Heart left ventricle (tissue), 16 donors: ENCODE measurements at regions of chr9 and their contacts with region 1.

Region 1: GRCh38 chr9:107172160-107172978 is 110.7 kb upstream of the RAD23B start:
- DNase-seq: peak; percentile 66 to 77 (median 74)
- ATAC-seq: peak in 3 of 4 donors; percentile 59 to 70 (median 60)
- H3K4me3 ChIP-seq: no peak overlapping the region
- H3K27ac ChIP-seq: peak overlapping the region in 1 of 12 donors; percentile 13
- H3K4me1 ChIP-seq: peaks cover 0 to 30% (median 19%) of the 10 kb centered on the region in 12 donors
- H3K27me3 ChIP-seq: no peaks in the 10 kb centered on the region
- CTCF ChIP-seq: peak; percentile 81 to 94 (median 90)
- POLR2A ChIP-seq: no peak

Region 2: DNA sequence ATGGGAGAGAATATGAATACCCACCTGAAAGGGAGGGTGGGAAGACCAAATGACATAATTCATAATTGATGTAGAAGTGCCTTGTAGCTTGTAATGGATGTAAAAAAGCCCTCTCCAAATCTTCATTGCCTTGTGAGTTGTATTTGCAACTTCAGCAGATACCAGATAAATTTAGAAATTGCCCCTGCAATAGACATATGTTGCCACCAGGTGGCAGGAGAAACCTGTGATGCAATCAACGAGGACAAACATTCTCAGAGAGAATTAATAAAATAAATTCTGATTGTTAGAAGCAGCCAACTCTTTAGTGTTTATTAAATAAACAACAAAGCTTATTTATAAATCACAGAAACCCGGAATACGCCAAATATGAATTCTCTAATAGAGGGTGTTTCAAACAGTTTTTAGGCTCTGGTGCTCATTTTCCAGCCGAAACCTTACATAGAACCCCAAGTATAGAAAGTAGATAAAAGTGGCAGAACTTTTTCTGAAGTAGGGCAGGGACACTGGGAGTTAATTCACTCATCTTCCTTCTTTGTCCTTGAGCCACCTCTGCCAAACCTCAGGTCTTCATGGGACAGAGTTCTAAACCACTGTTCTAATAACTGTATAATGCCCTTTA is 1330.2 kb before region 1 on chr9:
- intact Hi-C with region 1: loop called in 5 of 10 experiments (anchors 1 to 10 kb)
- DNase-seq: no peak
- ATAC-seq: no peak
- H3K4me3 ChIP-seq: no peak overlapping the region
- H3K27ac ChIP-seq: no peak overlapping the region
- H3K4me1 ChIP-seq: no peaks in the 10 kb centered on the region
- H3K27me3 ChIP-seq: no peaks in the 10 kb centered on the region
- CTCF ChIP-seq: peak; percentile 47 to 82 (median 61)
- POLR2A ChIP-seq: no peak

Region 3: GRCh38 chr9:105901514-105902109 is 1270.8 kb before region 1 on chr9:
- intact Hi-C with region 1: loop called in 6 of 10 experiments (anchors 2 to 5 kb)
- DNase-seq: peak in 3 of 5 donors; percentile 27 to 52 (median 46)
- ATAC-seq: peak; percentile 73 to 96 (median 94)
- H3K4me3 ChIP-seq: no peak overlapping the region
- H3K27ac ChIP-seq: no peak overlapping the region
- H3K4me1 ChIP-seq: peaks cover 0 to 3% (median 0%) of the 10 kb centered on the region in 12 donors
- H3K27me3 ChIP-seq: no peaks in the 10 kb centered on the region
- CTCF ChIP-seq: peak; percentile 51 to 77 (median 72)
- POLR2A ChIP-seq: no peak

Region 4: DNA sequence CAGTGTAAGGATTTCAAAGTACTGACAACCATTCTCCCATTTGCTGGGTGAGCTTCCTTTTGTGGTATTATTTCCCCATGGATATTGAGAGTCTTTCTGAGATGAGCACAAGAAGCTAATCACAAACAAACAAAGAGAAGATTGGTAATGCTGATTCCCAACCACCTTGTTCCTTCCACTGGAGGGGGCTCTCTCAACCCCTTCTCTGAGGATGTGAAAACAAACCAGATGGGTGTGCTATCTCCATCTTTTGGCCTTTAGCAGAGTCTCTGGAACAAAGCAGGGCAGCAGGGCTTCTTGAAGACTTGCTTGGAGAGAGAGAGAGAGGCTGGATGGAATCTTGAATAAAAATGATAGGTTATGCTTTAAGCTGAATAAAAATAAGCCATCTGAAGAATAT is 886.1 kb before region 1 on chr9:
- intact Hi-C with region 1: loop called in 1 of 10 experiments (anchors 10 kb)
- DNase-seq: no peak
- ATAC-seq: no peak
- H3K4me3 ChIP-seq: no peak overlapping the region
- H3K27ac ChIP-seq: no peak overlapping the region
- H3K4me1 ChIP-seq: peaks cover 0 to 12% (median 0%) of the 10 kb centered on the region in 12 donors
- H3K27me3 ChIP-seq: no peaks in the 10 kb centered on the region
- CTCF ChIP-seq: peak in 4 of 12 donors; percentile 19 to 41 (median 34)
- POLR2A ChIP-seq: no peak

Region 5: DNA sequence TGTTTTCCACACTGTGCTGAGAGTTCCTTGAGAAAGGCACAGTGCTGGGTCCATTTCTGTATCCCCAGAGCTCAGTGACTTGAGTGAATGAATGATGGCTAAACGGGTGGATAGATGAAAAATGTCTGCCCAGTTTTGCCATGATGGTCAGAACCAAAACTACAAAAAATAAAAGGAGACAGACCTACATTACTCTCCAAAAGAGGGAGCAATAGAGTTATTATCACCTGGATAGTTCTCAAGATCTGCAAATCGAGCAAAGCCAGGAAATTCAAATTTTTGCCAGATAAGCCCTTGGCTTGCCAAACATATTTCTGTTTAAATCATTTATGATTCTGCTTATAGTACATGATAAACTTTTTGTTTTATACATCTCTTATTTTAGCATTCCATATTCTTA is 523.6 kb before region 1 on chr9:
- intact Hi-C with region 1: loop called in 3 of 10 experiments (anchors 5 to 10 kb)
- DNase-seq: no peak
- ATAC-seq: no peak
- H3K4me3 ChIP-seq: no peak overlapping the region
- H3K27ac ChIP-seq: no peak overlapping the region
- H3K4me1 ChIP-seq: no peaks in the 10 kb centered on the region
- H3K27me3 ChIP-seq: no peaks in the 10 kb centered on the region
- CTCF ChIP-seq: peak in 8 of 12 donors; percentile 6 to 50 (median 34)
- POLR2A ChIP-seq: no peak

Region 6: GRCh38 chr9:107251756-107252322 is 79.5 kb after region 1 on chr9:
- intact Hi-C with region 1: loop called in 1 of 10 experiments (anchors 2 kb)
- DNase-seq: peak in 4 of 5 donors; percentile 40 to 69 (median 60)
- ATAC-seq: peak; percentile 95 to 99 (median 98)
- H3K4me3 ChIP-seq: no peak overlapping the region
- H3K27ac ChIP-seq: peak overlapping the region in 9 of 12 donors; percentile 10 to 70 (median 52)
- H3K4me1 ChIP-seq: peaks cover 0 to 26% (median 8%) of the 10 kb centered on the region in 12 donors
- H3K27me3 ChIP-seq: no peaks in the 10 kb centered on the region
- CTCF ChIP-seq: no peak
- POLR2A ChIP-seq: no peak

Region 7: DNA sequence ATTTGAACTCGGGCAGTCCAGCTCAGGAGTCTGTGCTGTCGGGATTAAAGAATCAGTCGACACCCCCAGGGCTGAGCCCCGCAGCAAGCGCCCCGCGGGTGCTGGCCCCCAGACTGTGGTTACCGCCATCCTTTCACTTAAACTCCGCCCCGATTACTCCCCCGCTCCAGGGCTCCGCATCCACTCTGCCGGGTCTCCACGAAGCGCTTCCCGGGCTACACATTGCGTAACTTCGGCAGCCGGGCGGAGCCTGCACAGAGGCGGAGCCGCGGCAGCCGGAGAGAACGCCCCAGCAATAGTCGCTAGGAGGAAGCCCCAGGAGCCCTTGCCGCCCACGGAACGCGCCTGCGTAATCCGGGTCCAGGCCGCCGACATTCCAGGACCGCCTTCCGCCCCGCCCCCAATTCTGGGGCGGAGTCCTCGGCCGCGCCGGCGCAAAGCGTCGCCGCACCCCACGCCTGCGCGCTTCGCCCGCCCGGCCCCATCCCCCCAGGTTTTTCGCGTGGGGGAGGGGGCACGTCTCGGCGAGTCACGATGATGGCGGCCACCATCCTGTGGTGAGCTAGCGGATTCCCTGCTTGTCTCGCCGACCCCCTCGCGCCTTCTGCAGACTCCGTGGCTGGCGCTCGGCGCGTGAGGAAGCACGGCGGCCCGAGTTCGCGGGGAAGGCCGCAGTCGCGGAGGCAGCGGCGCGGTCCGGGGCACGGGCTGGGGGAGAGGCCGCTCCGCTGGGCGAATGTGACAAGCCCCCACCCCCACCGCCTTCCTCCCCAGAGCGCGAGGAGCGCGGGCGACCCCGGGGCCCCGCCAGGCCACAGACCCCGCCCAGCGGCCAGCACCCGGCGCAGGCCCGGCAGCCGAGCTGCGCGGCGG is 110.6 kb after region 1 on chr9 and contains the start of gene RAD23B:
- intact Hi-C with region 1: no loop called
- DNase-seq: peak; percentile 99 to 100 (median 99)
- ATAC-seq: peak; percentile 95 to 98 (median 97)
- H3K4me3 ChIP-seq: peak within 1 kb of the TSS; percentile 72 to 99 (median 90)
- H3K27ac ChIP-seq: peak within 1 kb of the TSS; percentile 97 to 100 (median 99)
- H3K4me1 ChIP-seq: peaks cover 0 to 43% (median 24%) of the 10 kb centered on the region in 12 donors
- H3K27me3 ChIP-seq: no peaks in the 10 kb centered on the region
- CTCF ChIP-seq: no peak
- POLR2A ChIP-seq: peak in 1 of 2 donors; percentile 86
- total RNA-seq, gene RAD23B: 84.4 to 144 (median 105) TPM